ENCODE measurements at regions of chr14 and their contacts with region 1.

Region 1: GRCh38 chr14:43503590-43503907 is 1003.5 kb downstream of the FSCB start:
- DNase-seq: peak; percentile 45
- ATAC-seq: peak; percentile 92
- H3K4me3 ChIP-seq: no peak overlapping the region
- H3K27ac ChIP-seq: no peak overlapping the region
- H3K4me1 ChIP-seq: no peaks in the 10 kb centered on the region
- H3K27me3 ChIP-seq: no peaks in the 10 kb centered on the region
- CTCF ChIP-seq: peak; percentile 61

Region 2: DNA sequence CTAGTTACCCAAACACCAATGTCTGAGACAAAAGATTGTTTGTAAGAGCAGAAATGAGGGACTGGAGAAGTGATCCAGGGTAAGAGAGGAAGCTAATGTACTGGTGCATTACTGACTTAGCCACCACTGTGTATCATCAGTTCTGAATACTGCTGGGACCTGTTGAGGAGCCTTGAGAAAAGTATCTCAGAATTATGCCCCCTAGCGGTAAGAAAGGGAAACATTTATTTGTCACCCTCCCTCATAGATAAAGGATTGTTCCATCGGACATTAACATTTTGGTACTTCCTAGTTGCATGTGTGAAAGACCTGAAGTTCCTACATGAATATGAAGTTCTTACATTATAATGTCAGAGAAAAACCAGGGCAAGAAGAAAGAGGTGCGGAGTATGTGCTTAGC is 391.0 kb after region 1 on chr14:
- CTCF ChIA-PET with region 1: no interaction called
- POLR2A ChIA-PET with region 1: no interaction called
- intact Hi-C with region 1: loop called (anchors 2 kb)
- DNase-seq: peak; percentile 56
- ATAC-seq: peak; percentile 49; the same call in 1 of the 2 replicates
- H3K4me3 ChIP-seq: no peak overlapping the region
- H3K27ac ChIP-seq: no peak overlapping the region
- H3K4me1 ChIP-seq: 0 out of 2 replicates have a peak, but pooled peaks cover 4% of the 10 kb centered on the region
- H3K27me3 ChIP-seq: no peaks in the 10 kb centered on the region
- CTCF ChIP-seq: peak; percentile 83

Region 3: DNA sequence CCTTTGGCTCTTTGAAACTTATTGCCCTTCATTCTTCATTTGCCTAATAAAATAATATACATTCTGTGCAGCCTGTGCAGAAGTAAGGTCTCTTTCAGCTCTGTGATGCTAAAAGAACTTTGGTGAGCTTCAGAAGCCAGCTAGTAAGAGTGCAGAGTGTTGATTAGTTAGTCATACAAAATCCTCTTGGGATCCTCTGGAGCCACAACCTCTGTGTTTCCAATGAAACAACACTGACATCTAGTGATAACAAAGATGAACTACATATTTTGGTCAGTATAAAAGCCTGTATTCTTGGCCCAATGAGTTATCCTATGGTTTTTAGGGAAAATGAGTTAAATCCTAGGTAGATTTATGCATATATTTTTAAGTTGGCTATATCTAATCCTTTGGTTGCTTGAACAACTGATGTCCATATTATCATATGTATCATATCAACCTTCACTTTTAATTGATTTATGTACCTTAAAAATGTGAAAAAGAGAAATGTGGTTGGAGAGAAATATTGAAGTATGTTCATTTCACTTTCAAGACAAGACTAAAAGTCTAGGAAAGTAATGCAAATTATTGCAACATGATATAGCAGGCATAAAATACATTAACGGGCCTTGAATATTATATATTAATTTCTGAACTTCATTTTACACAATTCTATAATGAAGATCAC is 1299.8 kb after region 1 on chr14:
- CTCF ChIA-PET with region 1: no interaction called
- POLR2A ChIA-PET with region 1: no interaction called
- intact Hi-C with region 1: loop called (anchors 2 kb)
- DNase-seq: peak; percentile 77
- ATAC-seq: peak; percentile 95
- H3K4me3 ChIP-seq: no peak overlapping the region
- H3K27ac ChIP-seq: no peak overlapping the region
- H3K4me1 ChIP-seq: no peaks in the 10 kb centered on the region
- H3K27me3 ChIP-seq: no peaks in the 10 kb centered on the region
- CTCF ChIP-seq: peak; percentile 90

Region 4: GRCh38 chr14:44846232-44846824 is 1342.8 kb after region 1 on chr14:
- CTCF ChIA-PET with region 1: no interaction called
- POLR2A ChIA-PET with region 1: no interaction called
- intact Hi-C with region 1: loop called (anchors 2 kb)
- DNase-seq: peak; percentile 75
- ATAC-seq: peak; percentile 68
- H3K4me3 ChIP-seq: peak overlapping the region; percentile 6; the same call in 1 of the 2 replicates
- H3K27ac ChIP-seq: no peak overlapping the region
- H3K4me1 ChIP-seq: no peaks in the 10 kb centered on the region
- H3K27me3 ChIP-seq: 0 out of 2 replicates have a peak, but pooled peaks cover 4% of the 10 kb centered on the region
- CTCF ChIP-seq: peak; percentile 96